Activated CD4-positive, alpha-beta T cell treated with anti-CD3 and anti-CD28 coated beads, Interleukin-2, amount 10 ng/mL, durations not matched to agents 24 days and 14 days (primary cell): ENCODE measurements at regions of chr11 and their contacts with region 1.

Region 1: DNA sequence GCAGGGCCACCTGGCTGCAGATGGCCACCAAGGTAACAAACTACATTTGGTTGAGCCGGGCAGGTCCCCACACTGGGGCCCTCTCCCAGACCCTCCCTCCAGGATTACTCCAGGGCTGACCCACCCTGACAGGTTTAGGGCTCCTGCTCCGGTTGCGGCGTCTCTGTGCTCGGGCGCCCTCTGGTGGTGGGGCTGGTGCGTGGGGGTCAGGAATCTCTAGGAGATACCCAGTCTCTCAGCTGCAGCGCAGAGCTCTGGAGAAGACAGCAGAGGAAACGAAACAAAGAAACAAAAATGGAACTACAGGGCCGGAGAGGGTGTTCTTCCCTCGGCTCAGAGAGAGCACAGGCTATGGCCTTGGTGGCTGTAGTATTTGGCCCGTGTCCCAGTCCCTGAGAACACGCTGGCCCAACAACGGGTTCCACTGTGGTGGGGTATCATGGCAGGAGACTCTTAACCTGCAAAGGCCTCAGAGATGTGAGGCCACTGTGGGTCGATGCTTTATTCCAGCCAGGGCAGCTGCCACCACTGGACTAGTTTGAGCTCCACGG is 2.4 kb downstream of the C11orf96 start:
- DNase-seq: peak; percentile 93
- H3K4me3 Mint-ChIP-seq: peak overlapping the region; percentile 87
- H3K27ac Mint-ChIP-seq: peak overlapping the region; percentile 28
- H3K4me1 Mint-ChIP-seq: peaks cover 18% of the 10 kb centered on the region
- H3K27me3 Mint-ChIP-seq: peaks cover 62% of the 10 kb centered on the region

Region 2: DNA sequence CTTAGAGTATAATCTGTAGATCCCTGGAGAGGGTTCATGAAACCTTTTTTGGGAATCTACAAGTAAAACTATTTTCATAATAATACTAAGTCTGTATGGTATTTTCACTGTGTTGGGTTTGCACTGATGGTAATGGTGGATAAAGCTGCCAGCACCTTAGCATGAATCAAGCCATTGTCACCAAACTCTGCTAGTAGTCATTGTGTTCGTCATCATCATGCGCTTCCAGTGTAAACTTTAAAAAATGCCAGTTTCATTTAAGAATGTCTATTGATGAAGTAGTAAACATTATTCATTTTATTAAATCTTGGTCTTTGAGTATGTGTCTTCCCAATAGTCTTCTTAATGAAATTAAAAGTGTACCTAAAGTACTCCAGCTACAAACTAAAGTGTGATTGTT is 49.2 kb before region 1 on chr11:
- intact Hi-C with region 1: loop called (anchors 1 kb)
- DNase-seq: no peak
- H3K4me3 Mint-ChIP-seq: no peak overlapping the region
- H3K27ac Mint-ChIP-seq: no peak overlapping the region
- H3K4me1 Mint-ChIP-seq: no peaks in the 10 kb centered on the region
- H3K27me3 Mint-ChIP-seq: no peaks in the 10 kb centered on the region

Region 3: GRCh38 chr11:44036811-44037657 is 92.2 kb after region 1 on chr11:
- intact Hi-C with region 1: loop called (anchors 1 kb)
- DNase-seq: peak; percentile 76
- H3K4me3 Mint-ChIP-seq: no peak overlapping the region
- H3K27ac Mint-ChIP-seq: no peak overlapping the region
- H3K4me1 Mint-ChIP-seq: no peaks in the 10 kb centered on the region
- H3K27me3 Mint-ChIP-seq: peaks cover 7% of the 10 kb centered on the region

Region 4: DNA sequence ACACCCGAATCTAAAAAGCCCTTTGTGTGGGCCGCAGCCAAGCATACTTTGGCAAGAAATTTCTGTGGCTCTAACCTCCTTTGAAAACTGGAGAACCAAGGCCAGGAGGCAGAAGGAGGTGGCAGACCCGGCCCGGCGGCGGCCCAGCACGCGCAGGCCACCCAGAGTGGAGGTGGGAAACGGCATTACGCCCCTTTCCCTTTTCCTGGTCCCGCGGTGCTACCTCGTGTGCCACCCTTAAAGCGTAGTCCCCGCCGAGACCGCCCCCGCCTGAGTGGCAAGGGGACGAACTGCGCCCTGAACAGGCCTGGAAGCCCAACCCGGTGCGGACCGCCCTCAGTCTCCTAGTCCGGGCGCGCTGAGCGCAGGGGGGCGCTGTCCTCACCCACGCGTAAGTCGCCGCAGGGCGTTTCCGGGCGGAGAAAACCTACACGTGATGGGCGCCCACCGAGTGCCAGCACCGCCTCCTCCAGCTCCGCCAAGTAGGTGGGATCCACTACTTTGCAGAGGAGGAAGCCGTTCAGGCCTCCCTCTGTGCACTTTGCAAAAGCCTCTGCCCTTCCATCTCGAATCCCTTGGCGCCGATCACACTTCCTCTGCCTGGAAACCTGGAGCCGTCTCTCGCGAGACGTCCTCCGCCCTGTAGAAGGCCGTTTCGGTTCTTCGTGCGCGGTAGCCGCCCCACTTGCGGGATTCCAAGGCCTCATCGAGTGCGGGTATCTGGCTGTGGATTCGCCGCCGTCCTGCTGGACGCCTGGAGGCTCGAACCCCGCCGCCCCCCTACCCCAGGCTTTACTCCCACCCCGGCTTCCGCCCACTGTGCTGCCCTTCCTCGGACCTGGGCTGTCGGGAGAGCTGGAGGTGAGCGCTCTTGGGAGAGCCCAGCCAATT is 121.2 kb after region 1 on chr11 and contains the start of gene ACCS:
- intact Hi-C with region 1: loop called (anchors 5 kb)
- DNase-seq: peak; percentile 97
- H3K4me3 Mint-ChIP-seq: peak within 1 kb of the TSS; percentile 92
- H3K27ac Mint-ChIP-seq: peak within 1 kb of the TSS; percentile 95
- H3K4me1 Mint-ChIP-seq: peaks cover 25% of the 10 kb centered on the region
- H3K27me3 Mint-ChIP-seq: peaks cover 2% of the 10 kb centered on the region
- total RNA-seq, gene ACCS: 19.7 and 21.7 TPM in 2 replicates